ENCODE measurements at regions of chr15 and their contacts with region 1.

Region 1: GRCh38 chr15:52071546-52071945 is 41.0 kb downstream of the BCL2L10 start:
- DNase-seq: peak in 1 of 3 donors; percentile 83
- ATAC-seq: peak; percentile 87
- H3K4me3 ChIP-seq: no peak overlapping the region
- H3K4me1 ChIP-seq: peaks cover 36% of the 10 kb centered on the region
- CTCF ChIP-seq: no peak

Region 2: DNA sequence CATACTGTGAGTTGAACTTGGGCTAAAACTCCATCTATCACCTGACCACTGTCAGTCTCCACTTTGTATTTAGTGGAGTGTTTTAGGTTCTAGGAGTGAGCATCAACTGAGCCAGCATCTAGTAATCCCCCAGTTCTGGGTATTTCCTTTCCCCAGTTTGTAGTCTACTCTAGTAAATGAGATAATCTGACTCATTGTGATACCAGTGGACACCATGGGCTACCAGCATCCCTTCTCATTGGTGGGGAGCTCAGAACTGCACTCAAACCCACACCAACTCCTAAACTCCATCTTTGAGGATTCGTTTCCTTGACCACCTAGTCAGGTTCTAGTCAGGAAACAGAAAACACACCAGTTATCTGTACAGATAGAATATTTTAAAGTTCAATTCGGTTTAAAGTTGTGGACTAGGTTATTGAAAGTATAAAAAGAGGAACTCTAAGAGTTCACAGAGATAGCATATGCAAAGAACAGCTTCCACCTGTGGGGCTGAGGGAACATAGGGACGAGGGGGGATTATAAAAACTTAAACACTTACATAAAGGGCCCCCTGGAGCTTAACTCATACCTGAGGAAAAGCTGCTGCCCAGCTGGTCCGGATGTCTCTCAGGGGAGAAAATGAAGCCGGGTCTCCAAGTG is 136.0 kb before region 1 on chr15:
- intact Hi-C with region 1: no loop called
- DNase-seq: no peak
- ATAC-seq: peak; percentile 18
- H3K4me3 ChIP-seq: no peak overlapping the region
- H3K4me1 ChIP-seq: no peaks in the 10 kb centered on the region
- CTCF ChIP-seq: no peak

Region 3: DNA sequence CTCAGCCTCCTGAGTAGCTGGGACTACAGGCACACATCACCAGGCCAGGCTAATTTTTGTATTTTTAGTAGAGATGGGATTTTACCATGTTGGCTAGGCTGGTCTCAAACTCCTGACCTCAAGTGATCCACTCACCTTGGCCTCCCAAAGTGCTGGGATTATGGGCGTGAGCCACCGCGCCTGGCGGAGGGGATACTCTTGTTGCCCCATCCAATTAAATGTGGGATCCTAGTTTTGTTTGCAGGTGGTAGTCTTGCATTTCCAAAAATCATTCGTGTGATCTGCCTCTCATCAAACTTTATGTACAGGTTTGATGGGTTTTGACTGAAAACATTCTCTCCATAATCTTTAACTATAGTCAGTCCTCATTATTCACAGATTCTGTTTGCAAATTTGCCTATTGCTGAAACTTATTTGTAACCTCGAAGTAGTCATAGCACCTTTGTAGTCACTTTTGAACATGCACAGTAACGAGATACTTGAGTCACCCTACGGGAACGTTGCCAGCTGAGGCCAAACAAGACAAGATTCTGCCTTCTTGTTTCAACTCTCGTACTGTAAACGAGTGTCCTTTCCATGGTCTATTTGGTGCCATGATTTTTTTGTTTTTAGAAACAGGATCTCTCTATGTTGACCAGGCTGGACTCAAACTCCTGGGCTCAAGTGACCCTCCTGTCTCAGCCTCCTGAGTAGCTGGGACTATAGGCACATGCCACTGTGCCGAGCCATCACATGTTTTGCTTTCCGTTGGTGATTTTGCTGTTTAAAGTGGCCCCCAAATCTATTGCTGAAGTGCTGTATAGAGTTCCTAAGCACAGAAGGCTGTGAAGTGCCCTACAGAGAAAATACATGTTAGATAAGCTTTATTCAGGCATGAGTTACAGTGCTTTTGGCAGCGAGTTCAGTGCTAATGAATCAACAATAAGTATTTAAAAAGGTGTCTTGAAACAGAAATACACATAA is 60.6 kb before region 1 on chr15:
- intact Hi-C with region 1: loop called in 1 of 2 experiments (anchors 5 kb)
- DNase-seq: no peak
- ATAC-seq: no peak
- H3K4me3 ChIP-seq: no peak overlapping the region
- H3K4me1 ChIP-seq: no peaks in the 10 kb centered on the region
- CTCF ChIP-seq: no peak

Region 4: GRCh38 chr15:52019388-52020220 is 51.9 kb before region 1 on chr15:
- intact Hi-C with region 1: loop called in 1 of 2 experiments (anchors 2 kb)
- DNase-seq: peak; percentile 88 to 92 (median 92)
- ATAC-seq: peak; percentile 87
- H3K4me3 ChIP-seq: peak overlapping the region; percentile 40
- H3K4me1 ChIP-seq: peaks cover 26% of the 10 kb centered on the region
- CTCF ChIP-seq: no peak